Calu3 (cell line): ENCODE measurements at regions of chr13 and their contacts with region 1.

Region 1: DNA sequence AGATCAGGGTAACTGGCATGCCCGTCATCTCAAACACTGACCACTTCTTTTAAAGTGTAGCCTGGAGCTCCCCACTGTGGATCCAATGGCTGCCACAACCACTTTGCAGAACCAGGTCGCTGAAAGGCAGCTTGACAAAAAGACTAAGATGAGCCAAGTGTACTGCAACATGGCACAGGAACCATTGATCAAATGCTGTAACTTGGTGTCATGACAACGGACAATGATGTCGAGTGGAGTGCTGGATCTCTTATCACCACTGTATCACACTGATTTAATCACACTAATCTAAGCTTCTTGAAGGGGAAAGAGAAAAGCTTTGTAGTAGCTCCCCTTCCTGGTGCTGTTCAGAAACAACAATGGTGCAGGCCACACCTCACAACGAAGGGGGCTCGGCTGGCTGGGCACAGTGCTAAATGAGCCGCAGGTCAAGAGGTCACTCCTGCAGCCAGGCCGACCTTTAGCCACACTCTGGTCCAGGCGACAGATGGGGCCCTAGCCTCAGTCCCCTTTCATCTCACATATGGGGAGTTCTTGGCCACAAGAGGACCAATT is 2.2 kb upstream of the TNFRSF19 start:
- DNase-seq: peak; percentile 14
- H3K4me3 Mint-ChIP-seq: no peak overlapping the region
- H3K27ac Mint-ChIP-seq: no peak overlapping the region
- H3K4me1 Mint-ChIP-seq: no peaks in the 10 kb centered on the region
- H3K27me3 Mint-ChIP-seq: no peaks in the 10 kb centered on the region
- CTCF ChIP-seq: no peak

Region 2: GRCh38 chr13:22776394-22777186 is 791.4 kb before region 1 on chr13:
- CTCF ChIA-PET with region 1: no interaction called
- intact Hi-C with region 1: no loop called
- DNase-seq: no peak
- H3K4me3 Mint-ChIP-seq: no peak overlapping the region
- H3K27ac Mint-ChIP-seq: no peak overlapping the region
- H3K4me1 Mint-ChIP-seq: no peaks in the 10 kb centered on the region
- H3K27me3 Mint-ChIP-seq: no peaks in the 10 kb centered on the region
- CTCF ChIP-seq: no peak

Region 3: DNA sequence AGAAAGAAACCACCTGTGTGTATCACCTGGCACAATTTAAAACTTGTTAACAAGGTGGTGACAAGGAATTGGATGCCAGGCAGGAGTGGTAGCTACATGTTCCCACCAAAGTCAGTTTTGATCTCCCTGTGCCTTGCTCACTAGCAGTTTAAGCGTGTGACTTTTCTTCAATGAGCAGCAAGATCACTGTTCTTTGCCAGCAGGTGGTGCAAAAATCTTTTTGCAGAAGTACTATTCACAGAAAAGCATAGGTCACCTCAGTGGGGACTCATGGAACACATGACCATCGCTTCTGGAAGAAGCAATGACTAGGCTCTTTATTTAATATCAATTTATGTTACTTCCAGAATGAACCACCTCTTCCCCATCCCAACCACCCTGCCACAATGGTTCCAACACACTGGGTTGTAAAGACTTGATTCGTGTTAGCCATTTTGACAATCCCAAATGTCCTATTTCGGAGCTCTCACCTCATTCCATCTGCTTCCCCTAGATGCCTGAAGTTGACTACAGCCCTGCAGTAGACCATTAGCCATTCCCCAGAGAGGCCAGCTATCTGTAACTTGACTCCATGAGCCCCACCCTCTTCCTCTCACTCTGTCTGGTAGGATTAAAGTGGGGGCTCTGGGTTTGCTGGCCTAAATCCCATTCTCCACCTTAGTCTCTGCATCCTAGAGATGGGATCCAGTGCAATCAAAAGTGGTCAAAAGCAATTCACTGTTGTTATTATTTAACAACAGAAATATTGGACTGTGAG is 56.8 kb before region 1 on chr13:
- CTCF ChIA-PET with region 1: interaction called, 6 read pairs
- intact Hi-C with region 1: loop called (anchors 5 kb)
- DNase-seq: no peak
- H3K4me3 Mint-ChIP-seq: no peak overlapping the region
- H3K27ac Mint-ChIP-seq: no peak overlapping the region
- H3K4me1 Mint-ChIP-seq: peaks cover 11% of the 10 kb centered on the region
- H3K27me3 Mint-ChIP-seq: no peaks in the 10 kb centered on the region
- CTCF ChIP-seq: no peak

Region 4: DNA sequence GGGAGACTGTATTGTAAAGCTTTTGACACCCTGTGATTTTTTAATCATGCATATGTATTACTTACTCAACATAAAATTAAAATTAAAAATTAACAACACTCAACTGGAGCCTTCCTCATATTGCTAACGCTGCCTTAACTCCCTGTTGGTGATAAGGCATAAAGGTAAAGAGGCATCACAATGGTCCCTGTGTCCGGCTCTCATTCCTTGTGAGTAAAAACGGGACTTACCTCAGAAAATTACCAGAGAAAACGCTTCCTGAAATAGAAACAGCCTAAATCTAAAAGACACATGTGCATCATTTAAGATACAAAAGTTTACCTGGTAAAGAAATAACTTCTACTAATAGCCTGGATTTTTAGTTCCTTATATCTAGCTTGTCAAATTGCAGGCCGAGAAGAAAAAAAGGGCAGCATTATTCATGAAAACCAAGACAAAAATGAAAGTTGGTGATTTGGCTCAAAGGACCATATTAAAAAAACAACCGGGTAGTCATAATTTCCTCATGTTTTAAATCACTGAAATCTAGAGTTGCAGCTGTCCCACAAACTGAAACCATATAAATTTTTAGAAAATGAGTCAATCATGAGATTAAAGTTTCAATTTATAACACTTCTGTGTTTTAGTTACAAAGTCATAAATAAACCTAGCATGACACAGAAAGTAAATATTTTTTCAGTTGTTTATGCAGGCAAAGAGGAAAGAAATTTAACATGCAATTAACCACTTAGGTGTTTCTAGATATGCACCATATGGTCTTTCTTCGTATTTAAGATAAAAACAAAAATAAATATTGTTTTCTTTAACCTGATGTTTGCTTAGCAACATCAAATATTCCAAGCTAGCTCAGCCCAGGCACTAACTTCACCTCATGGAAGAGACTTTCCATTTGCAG is 226.5 kb after region 1 on chr13:
- CTCF ChIA-PET with region 1: no interaction called
- intact Hi-C with region 1: no loop called
- DNase-seq: no peak
- H3K4me3 Mint-ChIP-seq: no peak overlapping the region
- H3K27ac Mint-ChIP-seq: peak overlapping the region; percentile 66
- H3K4me1 Mint-ChIP-seq: peaks cover 18% of the 10 kb centered on the region
- H3K27me3 Mint-ChIP-seq: no peaks in the 10 kb centered on the region
- CTCF ChIP-seq: no peak